ENCODE measurements at regions of chr14 and their contacts with region 1.

Region 1: GRCh38 chr14:77301103-77301502 is 19.6 kb downstream of the POMT2 start:
- DNase-seq: peak; percentile 75
- ATAC-seq: peak; percentile 70
- H3K4me3 ChIP-seq: no peak overlapping the region
- H3K27ac ChIP-seq: no peak overlapping the region
- H3K4me1 ChIP-seq: peaks cover 38% of the 10 kb centered on the region
- H3K27me3 ChIP-seq: no peaks in the 10 kb centered on the region
- CTCF ChIP-seq: peak; percentile 89
- EP300 ChIP-seq: no peak
- POLR2A ChIP-seq: no peak
- RAD21 ChIP-seq: peak; percentile 88

Region 2: GRCh38 chr14:77133720-77134338 is 167.3 kb before region 1 on chr14:
- CTCF ChIA-PET with region 1: no interaction called
- POLR2A ChIA-PET with region 1: no interaction called
- in situ Hi-C with region 1: no loop called
- intact Hi-C with region 1: no loop called
- DNase-seq: peak; percentile 58
- ATAC-seq: peak; percentile 93
- H3K4me3 ChIP-seq: no peak overlapping the region
- H3K27ac ChIP-seq: no peak overlapping the region
- H3K4me1 ChIP-seq: no peaks in the 10 kb centered on the region
- H3K27me3 ChIP-seq: no peaks in the 10 kb centered on the region; a peak in 2 of 5 replicates
- CTCF ChIP-seq: no peak
- EP300 ChIP-seq: no peak
- POLR2A ChIP-seq: no peak
- RAD21 ChIP-seq: no peak

Region 3: GRCh38 chr14:77314043-77314442 is 12.9 kb after region 1 on chr14:
- CTCF ChIA-PET with region 1: interaction called, 54 read pairs
- POLR2A ChIA-PET with region 1: interaction called, 70 read pairs
- in situ Hi-C with region 1: no loop called
- intact Hi-C with region 1: loop called (anchors 1 kb)
- DNase-seq: no peak
- ATAC-seq: no peak
- H3K4me3 ChIP-seq: no peak overlapping the region
- H3K27ac ChIP-seq: no peak overlapping the region
- H3K4me1 ChIP-seq: peaks cover 65% of the 10 kb centered on the region
- H3K27me3 ChIP-seq: no peaks in the 10 kb centered on the region
- CTCF ChIP-seq: no peak
- EP300 ChIP-seq: no peak
- POLR2A ChIP-seq: no peak
- RAD21 ChIP-seq: no peak

Region 4: DNA sequence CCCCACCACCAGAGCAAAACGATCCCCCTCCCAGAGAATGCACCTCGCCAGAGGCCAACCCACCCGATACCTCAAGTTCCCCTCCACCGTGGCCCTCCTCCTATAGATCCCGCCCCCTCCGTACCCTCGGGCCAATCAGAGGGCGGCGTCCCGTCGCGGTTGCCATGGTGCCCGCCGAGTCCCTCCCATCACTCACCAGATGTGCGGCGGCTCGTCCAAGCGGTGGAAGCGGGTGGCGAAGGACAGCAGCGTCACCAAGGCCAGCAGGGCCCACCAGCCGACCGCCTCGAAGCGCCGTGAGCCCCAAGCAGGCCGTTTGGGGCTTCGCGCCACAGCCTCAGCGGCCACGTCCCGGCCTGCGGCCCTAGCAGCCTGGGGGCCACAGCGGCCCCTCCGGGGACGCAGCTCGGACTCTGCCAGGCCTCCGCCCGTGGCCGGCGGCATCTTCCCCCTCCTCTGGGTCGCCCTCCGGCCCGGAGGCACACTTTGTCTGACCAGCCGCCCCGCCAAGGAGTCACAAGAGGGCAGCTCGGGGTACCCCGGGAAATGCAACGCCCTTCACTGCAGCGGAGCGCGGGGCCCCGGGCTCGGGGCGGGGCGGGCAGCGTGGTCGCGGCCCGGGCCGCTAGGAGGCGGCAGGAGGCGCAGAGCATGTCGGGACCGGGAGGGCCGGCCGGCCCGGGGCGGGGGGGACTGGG is 19.3 kb after region 1 on chr14 and contains the start of gene POMT2:
- CTCF ChIA-PET with region 1: interaction called, 54 read pairs
- POLR2A ChIA-PET with region 1: interaction called, 70 read pairs
- in situ Hi-C with region 1: no loop called
- intact Hi-C with region 1: loop called (anchors 1 kb)
- DNase-seq: peak; percentile 88
- ATAC-seq: peak; percentile 83
- H3K4me3 ChIP-seq: peak within 1 kb of the TSS; percentile 79 to 93 (median 90)
- H3K27ac ChIP-seq: peak within 1 kb of the TSS; percentile 96
- H3K4me1 ChIP-seq: peaks cover 80% of the 10 kb centered on the region
- H3K27me3 ChIP-seq: no peaks in the 10 kb centered on the region
- CTCF ChIP-seq: peak; percentile 32; the same call in 1 of the 2 replicates
- EP300 ChIP-seq: no peak
- POLR2A ChIP-seq: peak in 1 of 2 experiments; percentile 78; a peak in 3 of 4 replicates
- RAD21 ChIP-seq: peak; percentile 54
- total RNA-seq, gene POMT2: 7.9 and 15.9 TPM in 2 replicates

Region 5: GRCh38 chr14:77409131-77409533 is 108.0 kb after region 1 on chr14:
- CTCF ChIA-PET with region 1: interaction called, 9 read pairs
- POLR2A ChIA-PET with region 1: interaction called, 3 read pairs
- in situ Hi-C with region 1: loop called (anchors 10 kb)
- intact Hi-C with region 1: loop called (anchors 1 kb)
- DNase-seq: peak; percentile 41
- ATAC-seq: peak; percentile 92
- H3K4me3 ChIP-seq: no peak overlapping the region
- H3K27ac ChIP-seq: no peak overlapping the region
- H3K4me1 ChIP-seq: peaks cover 9% of the 10 kb centered on the region
- H3K27me3 ChIP-seq: no peaks in the 10 kb centered on the region
- CTCF ChIP-seq: peak; percentile 83
- EP300 ChIP-seq: no peak
- POLR2A ChIP-seq: no peak
- RAD21 ChIP-seq: peak; percentile 64

Region 6: DNA sequence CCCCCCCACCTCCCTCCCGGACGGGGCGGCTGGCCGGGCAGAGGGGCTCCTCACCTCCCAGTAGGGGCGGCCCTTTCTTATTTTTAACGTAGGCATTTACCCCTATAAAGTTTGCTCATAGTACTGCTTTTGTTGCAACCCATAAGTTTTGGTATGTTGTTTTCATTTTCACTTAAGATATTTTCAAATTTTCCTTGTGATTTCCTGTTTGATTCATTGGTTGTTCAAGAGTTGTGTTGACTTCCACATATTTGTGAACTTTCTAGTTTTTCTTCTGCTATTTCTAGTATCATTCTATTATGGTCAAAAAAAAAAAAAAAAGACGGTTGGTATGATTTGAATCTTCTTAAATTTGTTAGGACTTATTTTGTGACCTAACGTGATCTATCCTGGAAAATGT is 115.7 kb after region 1 on chr14:
- CTCF ChIA-PET with region 1: no interaction called
- POLR2A ChIA-PET with region 1: no interaction called
- in situ Hi-C with region 1: loop called (anchors 10 kb)
- intact Hi-C with region 1: no loop called
- DNase-seq: no peak
- ATAC-seq: no peak
- H3K4me3 ChIP-seq: no peak overlapping the region
- H3K27ac ChIP-seq: no peak overlapping the region
- H3K4me1 ChIP-seq: no peaks in the 10 kb centered on the region
- H3K27me3 ChIP-seq: no peaks in the 10 kb centered on the region
- CTCF ChIP-seq: no peak
- EP300 ChIP-seq: no peak
- POLR2A ChIP-seq: no peak
- RAD21 ChIP-seq: no peak

Region 7: GRCh38 chr14:77542421-77543239 is 241.5 kb after region 1 on chr14:
- CTCF ChIA-PET with region 1: no interaction called
- POLR2A ChIA-PET with region 1: no interaction called
- in situ Hi-C with region 1: loop called (anchors 10 kb)
- intact Hi-C with region 1: no loop called
- DNase-seq: no peak
- ATAC-seq: no peak; the same call in 2 of the 3 replicates
- H3K4me3 ChIP-seq: no peak overlapping the region
- H3K27ac ChIP-seq: no peak overlapping the region
- H3K4me1 ChIP-seq: peaks cover 14% of the 10 kb centered on the region
- H3K27me3 ChIP-seq: no peaks in the 10 kb centered on the region
- CTCF ChIP-seq: no peak
- EP300 ChIP-seq: no peak
- POLR2A ChIP-seq: no peak
- RAD21 ChIP-seq: no peak

Region 8: DNA sequence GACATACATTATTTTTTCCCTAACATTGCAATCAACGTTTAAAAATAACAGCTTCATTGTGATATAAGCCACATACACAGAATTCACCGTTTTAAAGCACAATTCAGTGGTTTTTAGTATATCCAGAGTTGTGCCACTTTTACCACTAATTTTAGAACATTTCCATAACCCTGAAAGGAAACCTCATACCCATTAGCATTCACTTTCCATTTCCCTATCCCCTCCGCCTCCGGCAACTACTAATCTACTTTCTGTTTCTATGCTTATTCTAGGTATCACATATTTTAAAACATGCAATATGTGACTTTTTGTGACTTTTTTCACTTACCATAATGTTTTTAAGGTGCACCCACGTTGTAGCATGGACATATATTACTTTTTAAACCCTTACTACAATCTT is 253.1 kb after region 1 on chr14:
- CTCF ChIA-PET with region 1: interaction called, 10 read pairs
- POLR2A ChIA-PET with region 1: no interaction called
- in situ Hi-C with region 1: loop called (anchors 10 kb)
- intact Hi-C with region 1: loop called (anchors 1 kb)
- DNase-seq: no peak
- ATAC-seq: no peak
- H3K4me3 ChIP-seq: no peak overlapping the region
- H3K27ac ChIP-seq: no peak overlapping the region
- H3K4me1 ChIP-seq: no peaks in the 10 kb centered on the region
- H3K27me3 ChIP-seq: no peaks in the 10 kb centered on the region
- CTCF ChIP-seq: no peak
- EP300 ChIP-seq: no peak
- POLR2A ChIP-seq: no peak
- RAD21 ChIP-seq: no peak

Measured in HepG2 (cell line).